A549 (cell line): ENCODE measurements at regions of chr11 and their contacts with region 1.

Region 1: GRCh38 chr11:73288873-73289707 is 17.0 kb downstream of the P2RY6 start:
- DNase-seq: peak; percentile 86 to 91
- ATAC-seq: peak; percentile 72 to 84
- H3K4me3 ChIP-seq: peak overlapping the region; percentile 20; the same call in 1 of the 3 replicates
- H3K27ac ChIP-seq: peak overlapping the region; percentile 80 to 90
- H3K4me1 ChIP-seq: peaks cover 36% of the 10 kb centered on the region
- CTCF ChIP-seq: peak; percentile 96
- EP300 ChIP-seq: no peak
- POLR2A ChIP-seq: no peak
- RAD21 ChIP-seq: peak; percentile 98

Region 2: DNA sequence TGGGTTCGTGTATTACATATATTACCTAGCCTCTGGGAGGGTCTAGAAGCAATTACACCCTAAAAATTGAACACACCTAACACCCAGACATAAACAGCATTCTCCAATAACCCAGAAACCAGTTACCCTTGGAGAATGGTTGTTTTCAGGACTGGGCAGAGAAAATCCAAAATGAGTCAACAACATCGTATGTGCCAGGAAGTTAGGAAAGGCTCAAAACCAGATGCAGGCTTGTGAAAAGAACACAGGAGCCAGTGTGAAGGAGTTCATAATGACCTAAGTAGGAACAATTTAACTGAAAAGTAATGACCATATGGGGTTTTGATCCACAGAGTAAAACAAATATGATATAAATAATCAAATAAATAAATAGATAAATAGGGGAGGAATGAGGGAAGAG is 849.6 kb before region 1 on chr11:
- CTCF ChIA-PET with region 1: no interaction called
- POLR2A ChIA-PET with region 1: no interaction called
- DNase-seq: no peak
- ATAC-seq: no peak
- H3K4me3 ChIP-seq: no peak overlapping the region
- H3K27ac ChIP-seq: no peak overlapping the region
- H3K4me1 ChIP-seq: no peaks in the 10 kb centered on the region
- CTCF ChIP-seq: no peak
- EP300 ChIP-seq: no peak
- POLR2A ChIP-seq: no peak
- RAD21 ChIP-seq: no peak

Region 3: GRCh38 chr11:72848846-72849466 is 440.1 kb before region 1 on chr11:
- CTCF ChIA-PET with region 1: interaction called, 10 read pairs
- POLR2A ChIA-PET with region 1: no interaction called
- DNase-seq: peak; percentile 50 to 54
- ATAC-seq: peak; percentile 76 to 84; a peak in 5 of 6 replicates
- H3K4me3 ChIP-seq: no peak overlapping the region
- H3K27ac ChIP-seq: no peak overlapping the region
- H3K4me1 ChIP-seq: no peaks in the 10 kb centered on the region
- CTCF ChIP-seq: peak; percentile 68
- EP300 ChIP-seq: no peak
- POLR2A ChIP-seq: no peak
- RAD21 ChIP-seq: peak; percentile 61 to 64; a peak in 4 of 5 replicates

Region 4: GRCh38 chr11:73236854-73237253 is 52.2 kb before region 1 on chr11:
- CTCF ChIA-PET with region 1: interaction called, 122 read pairs
- POLR2A ChIA-PET with region 1: interaction called, 3 read pairs
- DNase-seq: peak; percentile 63 to 69
- ATAC-seq: peak; percentile 46 to 80; a peak in 4 of 6 replicates
- H3K4me3 ChIP-seq: no peak overlapping the region
- H3K27ac ChIP-seq: no peak overlapping the region
- H3K4me1 ChIP-seq: peaks cover 13% of the 10 kb centered on the region; the same call in 2 of the 3 replicates
- CTCF ChIP-seq: peak; percentile 52
- EP300 ChIP-seq: no peak
- POLR2A ChIP-seq: no peak
- RAD21 ChIP-seq: peak; percentile 46 to 72

Region 5: DNA sequence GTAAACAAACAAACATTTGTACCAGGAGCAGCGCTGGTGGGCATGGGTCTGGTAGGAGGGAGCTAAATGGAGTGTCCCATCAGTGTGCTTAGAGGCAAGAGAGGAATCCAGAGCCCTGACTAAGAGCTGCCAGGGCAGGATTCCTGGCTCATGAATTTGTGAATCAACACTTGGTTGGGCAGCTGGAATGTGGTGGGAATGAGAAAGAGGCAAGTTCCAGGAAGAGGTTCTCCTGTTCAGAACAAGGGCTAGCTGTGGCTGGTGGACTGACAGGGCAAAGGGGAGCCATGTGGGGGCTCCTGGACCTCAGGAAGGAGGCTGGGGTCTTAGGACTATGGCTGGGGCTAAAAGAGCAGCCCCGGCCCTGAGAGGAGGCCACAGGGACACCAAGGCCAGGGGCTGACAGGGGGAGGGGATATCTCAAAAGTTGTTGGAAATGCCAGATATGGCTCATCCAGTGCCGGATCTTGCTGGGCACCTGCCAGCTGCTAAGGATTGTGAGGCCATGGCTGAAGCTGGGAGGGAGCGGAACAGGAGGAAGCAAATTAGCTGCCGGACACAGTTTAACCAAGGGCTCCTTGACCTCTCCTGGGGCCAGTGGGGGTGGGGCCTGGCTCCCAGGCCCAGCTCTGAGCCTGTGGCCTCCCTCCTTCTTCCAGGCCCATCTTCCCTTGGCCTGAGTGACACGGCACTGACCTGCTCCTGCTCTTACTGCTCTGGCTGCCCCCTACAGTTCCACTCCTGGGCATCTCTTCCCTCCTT is 31.6 kb before region 1 on chr11:
- CTCF ChIA-PET with region 1: interaction called, 224 read pairs
- POLR2A ChIA-PET with region 1: no interaction called
- DNase-seq: peak in 1 of 2 experiments; percentile 77
- ATAC-seq: peak; percentile 66 to 90
- H3K4me3 ChIP-seq: no peak overlapping the region
- H3K27ac ChIP-seq: peak overlapping the region; percentile 51 to 85
- H3K4me1 ChIP-seq: peaks cover 17% of the 10 kb centered on the region
- CTCF ChIP-seq: no peak
- EP300 ChIP-seq: no peak
- POLR2A ChIP-seq: no peak
- RAD21 ChIP-seq: no peak

Region 6: DNA sequence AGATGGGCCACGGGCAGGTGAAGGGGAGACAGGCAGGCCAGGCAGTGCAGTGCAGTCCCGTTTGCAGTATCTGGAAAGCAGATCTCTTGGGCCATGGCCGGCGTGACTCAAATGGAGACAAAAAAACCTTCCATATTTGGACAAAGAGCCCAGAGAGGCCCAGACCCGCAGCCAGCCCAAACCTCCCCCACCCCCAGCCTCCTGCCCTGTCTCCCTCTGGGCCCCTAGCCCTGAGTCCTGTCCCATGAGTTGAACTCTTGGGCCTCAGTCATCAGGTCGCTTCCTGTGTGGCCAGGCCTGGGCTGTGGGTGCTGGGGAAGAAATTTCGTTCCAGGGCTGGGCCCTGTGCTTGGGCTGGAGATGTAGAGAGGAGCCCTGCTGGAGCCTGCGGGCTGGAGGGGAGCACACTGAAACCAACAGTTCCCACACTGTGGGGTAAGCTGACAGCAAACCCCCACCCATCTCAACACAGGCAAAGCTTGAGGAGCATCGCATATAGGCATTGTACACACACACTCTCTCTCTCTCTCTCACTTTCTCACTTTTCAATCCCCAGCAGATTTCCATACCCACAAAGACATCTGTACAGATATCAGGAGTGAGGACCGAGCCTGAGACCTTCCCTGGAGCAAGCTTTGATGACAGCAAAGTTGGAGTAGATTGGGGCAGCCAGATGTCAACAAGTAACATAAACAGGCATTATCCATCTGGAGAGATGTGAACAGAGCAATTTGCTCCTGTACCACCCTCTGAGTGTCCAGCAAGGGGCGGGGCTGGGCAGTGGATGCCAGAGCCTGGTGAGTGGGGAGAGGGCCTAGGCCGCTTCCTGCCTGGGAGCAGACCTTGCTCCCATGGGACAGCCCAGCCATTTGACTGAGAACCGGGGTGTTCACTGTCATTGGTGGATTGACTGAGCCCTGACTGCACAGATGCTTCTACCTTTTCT is 36.2 kb after region 1 on chr11:
- CTCF ChIA-PET with region 1: interaction called, 23 read pairs
- POLR2A ChIA-PET with region 1: no interaction called
- DNase-seq: no peak
- ATAC-seq: no peak
- H3K4me3 ChIP-seq: no peak overlapping the region
- H3K27ac ChIP-seq: no peak overlapping the region
- H3K4me1 ChIP-seq: peaks cover 9% of the 10 kb centered on the region; the same call in 2 of the 3 replicates
- CTCF ChIP-seq: no peak
- EP300 ChIP-seq: no peak
- POLR2A ChIP-seq: no peak
- RAD21 ChIP-seq: no peak

Region 7: GRCh38 chr11:73439002-73439843 is 150.1 kb after region 1 on chr11:
- CTCF ChIA-PET with region 1: no interaction called
- POLR2A ChIA-PET with region 1: no interaction called
- DNase-seq: no peak
- ATAC-seq: peak; percentile 24 to 33; a peak in 3 of 6 replicates
- H3K4me3 ChIP-seq: no peak overlapping the region
- H3K27ac ChIP-seq: no peak overlapping the region
- H3K4me1 ChIP-seq: no peaks in the 10 kb centered on the region
- CTCF ChIP-seq: no peak
- EP300 ChIP-seq: no peak
- POLR2A ChIP-seq: no peak
- RAD21 ChIP-seq: no peak

Region 8: DNA sequence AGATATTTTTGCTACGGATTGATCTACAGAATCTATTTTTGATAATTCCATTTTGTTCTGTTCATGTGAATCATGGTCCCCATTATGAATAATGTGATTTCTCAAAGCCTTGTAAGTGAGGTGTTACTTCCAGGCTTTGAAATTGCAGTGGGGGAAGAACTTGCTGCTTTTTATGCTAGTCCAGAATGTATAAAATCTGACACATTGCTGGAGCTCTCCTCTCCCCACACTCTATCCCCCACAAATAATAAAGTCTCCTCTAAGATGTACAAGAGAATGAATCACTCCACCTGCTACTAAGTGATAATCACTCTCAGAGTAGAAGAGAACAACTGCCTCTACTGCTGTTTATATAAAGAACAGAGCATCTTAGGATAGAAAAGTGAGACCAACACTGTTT is 477.7 kb after region 1 on chr11:
- CTCF ChIA-PET with region 1: no interaction called
- POLR2A ChIA-PET with region 1: no interaction called
- DNase-seq: no peak
- ATAC-seq: no peak
- H3K4me3 ChIP-seq: no peak overlapping the region
- H3K27ac ChIP-seq: no peak overlapping the region
- H3K4me1 ChIP-seq: peaks cover 6% of the 10 kb centered on the region; the same call in 1 of the 3 replicates
- CTCF ChIP-seq: no peak
- EP300 ChIP-seq: no peak
- POLR2A ChIP-seq: no peak
- RAD21 ChIP-seq: no peak